ENCODE measurements at regions of chr5 and their contacts with region 1.

Region 1: GRCh38 chr5:16642862-16643261 is 26.1 kb upstream of the RETREG1 start:
- DNase-seq: no peak
- ATAC-seq: no peak
- H3K4me3 ChIP-seq: no peak overlapping the region
- H3K4me3 Mint-ChIP-seq: peak overlapping the region in 1 of 10 donors; percentile 29
- H3K27ac ChIP-seq: no peak overlapping the region
- H3K27ac Mint-ChIP-seq: peak overlapping the region in 3 of 9 donors; percentile 11 to 80 (median 59)
- H3K4me1 ChIP-seq: peaks cover 0 to 12% of the 10 kb centered on the region in 2 donors
- H3K4me1 Mint-ChIP-seq: peaks cover 6 to 50% (median 23%) of the 10 kb centered on the region in 7 donors
- H3K27me3 ChIP-seq: no peaks in the 10 kb centered on the region
- H3K27me3 Mint-ChIP-seq: no peaks in the 10 kb centered on the region

Region 2: DNA sequence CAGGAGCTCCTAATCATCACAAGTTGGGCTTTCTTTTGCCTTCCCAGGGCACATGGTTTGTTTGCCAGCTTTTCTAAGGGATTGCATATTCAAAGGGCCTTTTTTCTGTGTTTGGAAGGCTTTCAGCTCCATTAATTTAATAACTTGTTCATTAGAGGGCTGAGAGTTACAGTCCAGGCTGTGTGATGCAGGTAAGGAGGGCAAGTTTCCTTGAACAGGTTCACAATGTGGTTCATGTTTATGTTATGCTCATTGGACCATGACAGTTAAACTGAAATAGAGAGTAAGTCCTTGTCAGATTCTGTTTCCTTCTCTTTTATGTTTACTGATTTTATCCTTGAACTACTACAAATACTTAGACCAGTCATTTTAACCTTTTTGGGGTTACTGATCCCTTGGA is 637.6 kb before region 1 on chr5:
- CTCF ChIA-PET with region 1: no interaction called
- POLR2A ChIA-PET with region 1: no interaction called
- intact Hi-C with region 1: no loop called
- DNase-seq: no peak
- ATAC-seq: no peak
- H3K4me3 ChIP-seq: no peak overlapping the region
- H3K4me3 Mint-ChIP-seq: no peak overlapping the region
- H3K27ac ChIP-seq: no peak overlapping the region
- H3K27ac Mint-ChIP-seq: no peak overlapping the region
- H3K4me1 ChIP-seq: no peaks in the 10 kb centered on the region
- H3K4me1 Mint-ChIP-seq: no peaks in the 10 kb centered on the region
- H3K27me3 ChIP-seq: no peaks in the 10 kb centered on the region
- H3K27me3 Mint-ChIP-seq: no peaks in the 10 kb centered on the region

Region 3: DNA sequence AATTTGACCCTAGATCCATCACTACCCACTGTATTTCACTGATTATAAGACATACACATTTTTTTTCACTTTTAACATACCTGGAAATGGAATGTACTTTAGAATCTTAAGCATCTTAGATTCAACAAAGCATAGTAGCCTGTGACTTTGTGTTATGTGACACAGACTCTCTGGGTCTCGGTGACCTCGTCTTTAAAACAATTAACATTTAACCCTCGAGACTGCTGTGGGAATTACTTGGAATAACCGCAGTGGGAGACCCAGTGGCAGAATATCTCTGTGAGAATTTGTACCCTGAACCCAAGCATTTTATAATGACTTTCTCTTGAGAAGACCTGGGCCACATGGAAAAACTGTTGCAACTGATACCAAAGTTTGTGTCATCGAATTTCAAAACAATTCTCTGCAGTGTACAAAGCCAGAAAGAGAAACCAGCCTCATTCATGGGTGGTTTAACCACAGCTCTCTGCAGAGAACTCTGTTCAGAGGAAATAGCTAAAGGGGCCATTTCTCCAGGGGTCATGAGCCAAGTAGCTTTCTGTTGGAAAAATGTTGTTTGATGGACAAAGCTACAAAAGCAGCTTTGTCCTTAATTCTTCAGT is 16.1 kb before region 1 on chr5:
- CTCF ChIA-PET with region 1: no interaction called
- POLR2A ChIA-PET with region 1: interaction called, 10 read pairs
- intact Hi-C with region 1: loop called in 1 of 2 experiments (anchors 1 kb)
- DNase-seq: peak in 7 of 9 donors; percentile 41 to 71 (median 56)
- ATAC-seq: peak; percentile 52
- H3K4me3 ChIP-seq: no peak overlapping the region
- H3K4me3 Mint-ChIP-seq: peak overlapping the region in 9 of 10 donors; percentile 2 to 78 (median 53)
- H3K27ac ChIP-seq: peak overlapping the region; percentile 54
- H3K27ac Mint-ChIP-seq: peak overlapping the region; percentile 23 to 99 (median 86)
- H3K4me1 ChIP-seq: peaks cover 0 to 49% of the 10 kb centered on the region in 2 donors
- H3K4me1 Mint-ChIP-seq: peaks cover 38 to 78% (median 66%) of the 10 kb centered on the region in 7 donors
- H3K27me3 ChIP-seq: no peaks in the 10 kb centered on the region
- H3K27me3 Mint-ChIP-seq: no peaks in the 10 kb centered on the region